Endothelial cell of umbilical vein (primary cell): ENCODE measurements at regions of chr1 and their contacts with region 1.

Region 1: DNA sequence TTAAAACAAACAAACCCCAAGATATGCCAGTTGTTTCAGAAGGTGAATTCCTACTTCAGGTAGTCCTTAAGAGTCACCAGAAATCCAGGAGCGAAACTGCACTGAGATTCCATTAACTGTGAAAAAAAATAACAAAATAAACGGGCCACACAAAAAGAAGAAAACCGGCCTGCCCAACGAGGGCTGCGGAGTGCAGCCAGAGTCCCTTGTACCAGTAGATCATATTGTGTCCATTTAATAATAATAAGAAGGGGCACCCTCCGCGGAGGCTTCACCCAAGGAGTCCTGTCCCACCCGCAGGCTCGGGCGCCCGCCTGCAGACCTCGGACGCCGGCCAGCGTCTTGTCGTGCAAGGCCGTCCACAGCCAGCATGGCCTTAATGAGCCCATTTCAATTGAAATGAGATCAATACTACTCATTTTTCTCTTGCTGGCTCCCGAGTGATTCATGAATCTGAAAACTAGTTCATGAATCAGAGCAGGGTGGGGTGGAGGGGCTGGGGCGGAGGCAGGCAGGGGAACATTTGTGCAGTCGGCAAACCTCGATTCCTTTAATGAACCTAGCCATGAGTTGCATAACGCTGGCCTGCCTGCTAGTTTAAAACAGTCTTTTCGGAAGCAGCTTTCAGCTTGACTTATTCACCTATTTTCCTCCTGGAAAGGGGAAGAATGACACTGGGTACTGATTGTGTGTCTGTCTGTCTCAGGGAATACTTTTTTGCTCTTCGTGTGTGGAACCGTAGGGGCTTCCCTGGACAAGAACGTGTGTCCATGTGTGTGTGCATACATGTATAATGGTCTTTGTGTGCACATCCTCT is 113.1 kb upstream of the IRF2BP2 start:
- DNase-seq: peak; percentile 21
- H3K4me3 ChIP-seq: peak overlapping the region in 1 of 3 experiments; percentile 8
- H3K27ac ChIP-seq: peak overlapping the region; percentile 91
- H3K4me1 ChIP-seq: peaks cover 82% of the 10 kb centered on the region
- H3K27me3 ChIP-seq: no peaks in the 10 kb centered on the region
- CTCF ChIP-seq: no peak
- POLR2A ChIP-seq: no peak

Region 2: GRCh38 chr1:234599617-234600417 is 123.3 kb before region 1 on chr1:
- CTCF ChIA-PET with region 1: interaction called, 8 read pairs
- POLR2A ChIA-PET with region 1: interaction called, 9 read pairs
- dilution Hi-C with region 1: no loop called
- intact Hi-C with region 1: loop called (anchors 1 kb)
- DNase-seq: peak; percentile 92
- H3K4me3 ChIP-seq: peak overlapping the region; percentile 18 to 53 (median 32)
- H3K27ac ChIP-seq: peak overlapping the region; percentile 87
- H3K4me1 ChIP-seq: peaks cover 50% of the 10 kb centered on the region
- H3K27me3 ChIP-seq: no peaks in the 10 kb centered on the region
- CTCF ChIP-seq: peak in 1 of 2 donors; percentile 3
- POLR2A ChIP-seq: no peak

Region 3: GRCh38 chr1:234676103-234676594 is 47.0 kb before region 1 on chr1:
- CTCF ChIA-PET with region 1: no interaction called
- POLR2A ChIA-PET with region 1: no interaction called
- dilution Hi-C with region 1: no loop called
- intact Hi-C with region 1: no loop called
- DNase-seq: peak; percentile 82
- H3K4me3 ChIP-seq: peak overlapping the region in 2 of 3 experiments; percentile 23 to 48
- H3K27ac ChIP-seq: no peak overlapping the region
- H3K4me1 ChIP-seq: peaks cover 3% of the 10 kb centered on the region
- H3K27me3 ChIP-seq: no peaks in the 10 kb centered on the region
- CTCF ChIP-seq: no peak
- POLR2A ChIP-seq: no peak

Region 4: DNA sequence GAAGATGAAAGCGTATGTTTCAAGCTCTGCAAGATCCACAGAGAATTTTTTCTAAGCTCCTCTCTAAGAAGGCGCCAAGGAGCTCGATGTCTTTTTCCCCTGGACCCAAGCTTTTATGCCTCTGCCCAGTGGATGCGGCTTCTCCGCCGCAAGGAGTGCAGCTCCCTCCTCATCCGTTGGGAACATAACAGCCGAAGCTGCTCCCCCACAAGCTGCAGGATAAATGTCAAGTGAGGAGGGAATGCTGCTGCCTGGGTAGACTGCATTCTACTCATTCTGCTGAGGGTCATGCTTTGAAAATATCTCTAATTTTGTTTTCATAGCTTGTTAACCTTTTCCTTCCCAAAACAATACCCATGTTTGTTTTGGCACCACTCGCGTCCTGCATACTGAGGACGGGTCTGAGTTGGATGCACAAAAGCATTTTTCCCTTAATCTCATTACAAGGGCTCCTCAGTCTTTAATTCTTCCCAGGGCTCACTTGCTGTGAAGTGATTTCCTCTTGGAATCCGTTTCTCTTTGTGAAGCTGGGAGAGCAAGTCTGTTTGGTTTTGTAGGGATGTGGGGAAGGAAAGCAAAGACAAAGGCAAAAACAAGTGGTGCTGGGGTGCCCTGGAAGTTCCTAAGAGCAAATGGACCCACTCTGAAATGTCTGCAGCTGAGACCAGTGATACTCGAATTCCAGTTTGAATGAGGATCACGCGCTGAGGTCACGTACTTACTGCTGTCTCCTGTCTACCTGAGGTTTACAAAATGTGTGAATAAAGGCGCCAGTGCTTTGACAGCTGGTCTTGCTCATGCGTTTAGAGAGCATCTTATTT is 20.9 kb after region 1 on chr1:
- CTCF ChIA-PET with region 1: interaction called, 46 read pairs
- POLR2A ChIA-PET with region 1: interaction called, 26 read pairs
- dilution Hi-C with region 1: no loop called
- intact Hi-C with region 1: loop called (anchors 1 kb)
- DNase-seq: peak; percentile 99
- H3K4me3 ChIP-seq: peak overlapping the region in 1 of 3 experiments; percentile 7
- H3K27ac ChIP-seq: peak overlapping the region; percentile 88
- H3K4me1 ChIP-seq: peaks cover 36% of the 10 kb centered on the region
- H3K27me3 ChIP-seq: no peaks in the 10 kb centered on the region
- CTCF ChIP-seq: peak in 1 of 2 donors; percentile 15
- POLR2A ChIP-seq: peak; percentile 91

Region 5: DNA sequence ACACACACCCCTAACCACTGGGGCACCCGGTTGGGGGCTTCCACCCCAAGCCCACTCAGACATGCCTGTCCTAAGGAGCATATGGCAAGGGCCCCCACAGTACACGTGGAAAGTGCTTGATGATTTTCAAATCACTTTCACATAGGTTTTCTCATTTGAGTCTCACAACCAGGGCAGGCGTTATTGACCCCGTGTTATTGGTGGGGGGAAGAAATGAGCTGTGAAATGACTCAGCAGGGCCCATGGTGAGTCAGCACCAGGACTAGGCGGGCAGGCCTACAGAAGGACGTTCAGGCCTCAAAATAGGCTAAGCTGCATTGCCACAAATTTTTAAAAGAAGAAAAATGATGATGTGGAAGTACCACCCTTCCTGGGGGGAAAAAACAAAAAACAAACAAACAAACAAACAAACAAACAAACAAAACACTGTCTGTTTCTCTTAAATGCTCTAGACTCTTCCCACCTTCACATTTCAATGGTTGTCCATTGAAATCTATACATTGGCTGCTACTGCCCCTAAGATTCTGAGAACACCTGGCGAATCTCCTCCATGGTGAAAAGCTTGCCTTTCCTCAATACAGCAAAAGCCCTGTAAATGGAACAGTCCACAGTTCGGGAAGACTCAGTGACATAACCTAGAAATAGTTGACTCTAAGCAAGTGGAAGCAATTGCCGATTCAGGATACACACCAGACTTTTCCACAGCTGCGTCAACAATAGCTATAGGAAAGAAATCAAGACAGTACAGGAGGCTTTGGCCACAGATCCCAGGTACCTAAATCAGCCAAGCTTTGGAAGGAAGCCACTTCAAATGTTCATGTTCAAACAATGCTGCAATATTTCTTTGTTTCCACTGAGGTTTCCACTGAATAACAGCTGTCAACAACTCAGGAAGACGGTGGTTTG is 170.9 kb after region 1 on chr1:
- CTCF ChIA-PET with region 1: interaction called, 10 read pairs
- POLR2A ChIA-PET with region 1: no interaction called
- dilution Hi-C with region 1: no loop called
- intact Hi-C with region 1: loop called (anchors 1 kb)
- DNase-seq: peak; percentile 98
- H3K4me3 ChIP-seq: no peak overlapping the region
- H3K27ac ChIP-seq: peak overlapping the region; percentile 93
- H3K4me1 ChIP-seq: peaks cover 20% of the 10 kb centered on the region
- H3K27me3 ChIP-seq: no peaks in the 10 kb centered on the region
- CTCF ChIP-seq: no peak
- POLR2A ChIP-seq: no peak

Region 6: DNA sequence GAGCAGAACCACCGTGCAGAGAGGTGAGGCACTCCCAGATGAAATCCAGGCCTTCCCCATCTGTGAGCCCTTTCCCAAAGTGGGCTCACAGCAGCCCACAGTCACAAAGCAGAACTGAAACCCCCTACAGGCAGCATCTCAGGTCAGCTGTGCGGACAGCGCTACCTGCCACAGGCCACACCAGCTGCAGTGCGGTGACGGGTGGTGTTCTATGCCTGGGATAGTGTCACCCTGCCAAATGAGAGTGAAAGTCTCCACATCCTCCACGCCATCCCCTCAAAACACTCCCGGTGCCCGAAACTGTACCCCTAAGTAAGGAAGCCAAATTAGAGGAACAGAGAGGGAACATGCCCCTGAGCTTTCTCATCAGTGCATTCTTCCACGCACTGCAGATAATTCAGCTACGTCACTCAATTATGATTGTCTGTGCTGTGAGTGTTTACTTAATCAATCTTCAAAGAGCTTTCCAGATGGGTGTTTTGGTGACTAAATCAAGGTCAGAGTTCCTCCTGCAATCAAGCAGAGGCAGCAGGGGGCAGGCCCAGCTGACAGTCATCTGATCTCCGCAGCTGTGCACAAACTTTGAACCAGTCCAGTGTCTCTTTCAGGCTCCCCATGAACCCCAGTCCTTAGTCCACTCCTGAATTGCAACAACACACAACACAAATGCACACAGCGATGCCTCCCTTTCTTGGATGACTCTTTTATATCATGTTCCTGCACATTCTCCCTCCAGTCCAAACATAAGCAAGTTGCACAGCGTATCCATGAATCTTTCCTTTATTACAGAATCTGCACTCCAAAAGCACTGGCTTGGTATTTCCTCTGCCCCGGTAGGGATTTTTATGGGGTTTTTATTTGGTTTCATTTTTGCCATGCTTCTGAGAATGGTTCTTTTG is 255.5 kb after region 1 on chr1:
- CTCF ChIA-PET with region 1: interaction called, 3 read pairs
- POLR2A ChIA-PET with region 1: interaction called, 11 read pairs
- dilution Hi-C with region 1: no loop called
- intact Hi-C with region 1: loop called (anchors 1 kb)
- DNase-seq: peak; percentile 86
- H3K4me3 ChIP-seq: no peak overlapping the region
- H3K27ac ChIP-seq: peak overlapping the region; percentile 88
- H3K4me1 ChIP-seq: peaks cover 69% of the 10 kb centered on the region
- H3K27me3 ChIP-seq: no peaks in the 10 kb centered on the region
- CTCF ChIP-seq: no peak
- POLR2A ChIP-seq: no peak

Region 7: GRCh38 chr1:235075188-235075926 is 352.2 kb after region 1 on chr1:
- CTCF ChIA-PET with region 1: interaction called, 4 read pairs
- POLR2A ChIA-PET with region 1: no interaction called
- dilution Hi-C with region 1: loop called (anchors 10 kb)
- intact Hi-C with region 1: loop called (anchors 1 kb)
- DNase-seq: peak; percentile 92
- H3K4me3 ChIP-seq: no peak overlapping the region
- H3K27ac ChIP-seq: peak overlapping the region; percentile 95
- H3K4me1 ChIP-seq: peaks cover 33% of the 10 kb centered on the region
- H3K27me3 ChIP-seq: no peaks in the 10 kb centered on the region
- CTCF ChIP-seq: no peak
- POLR2A ChIP-seq: peak; percentile 58